ENCODE measurements at regions of chr6 and their contacts with region 1.

Region 1: DNA sequence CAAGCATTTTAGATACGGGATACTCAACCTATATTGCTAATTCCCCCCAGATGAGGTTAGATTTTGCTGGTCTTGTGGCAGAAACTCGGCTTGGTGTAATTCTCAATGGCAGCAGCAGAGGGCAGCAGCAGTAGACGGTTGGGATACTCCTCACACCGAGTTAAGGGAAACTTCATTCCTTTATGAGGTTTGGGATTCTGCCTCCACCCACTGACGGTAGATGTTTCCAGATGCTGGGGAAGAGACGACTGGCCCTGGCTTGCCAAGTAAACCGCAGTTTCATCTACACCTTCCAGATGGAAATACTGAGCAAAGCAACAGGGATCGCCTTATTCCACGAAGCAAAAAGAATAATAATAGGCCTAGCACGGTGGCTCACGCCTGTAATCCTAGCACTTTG is 8.2 kb upstream of the TBC1D7 start:
- DNase-seq: peak; percentile 95
- H3K4me3 ChIP-seq: no peak overlapping the region
- H3K27ac ChIP-seq: peak overlapping the region; percentile 43
- H3K4me1 ChIP-seq: peaks cover 9% of the 10 kb centered on the region
- H3K27me3 ChIP-seq: no peaks in the 10 kb centered on the region
- CTCF ChIP-seq: peak; percentile 80 to 88

Region 2: DNA sequence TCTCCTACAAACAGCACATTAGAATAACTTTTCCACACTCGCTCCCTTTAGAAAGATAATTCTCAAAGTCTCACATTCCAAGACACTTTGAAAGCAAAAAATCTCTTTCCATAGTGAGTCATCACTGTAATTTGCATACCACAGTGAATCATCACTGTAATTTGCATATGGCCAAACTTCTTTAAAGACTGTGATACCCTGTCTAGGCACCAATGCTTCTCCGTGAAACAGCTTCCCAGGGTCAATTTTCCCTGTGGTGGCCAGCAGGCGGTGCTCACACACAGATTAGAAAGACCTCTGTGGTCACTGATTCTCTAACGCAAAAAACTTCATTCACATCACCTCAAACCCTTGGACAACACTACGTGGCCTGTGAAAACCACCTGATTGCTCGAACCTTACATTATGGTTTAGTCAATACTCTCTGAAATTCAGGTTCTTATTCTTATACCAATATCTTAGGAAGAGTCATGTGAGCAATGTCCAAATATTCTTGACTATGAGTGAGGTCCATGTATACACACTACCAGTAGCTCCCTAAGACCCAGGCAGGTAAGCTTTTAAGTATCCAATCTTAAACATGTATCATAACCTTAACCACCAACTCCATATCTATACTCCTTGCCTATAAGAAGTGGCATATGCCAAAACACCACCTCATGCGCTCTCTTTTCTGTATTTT is 698.5 kb before region 1 on chr6:
- CTCF ChIA-PET with region 1: no interaction called
- dilution Hi-C with region 1: no loop called
- in situ Hi-C with region 1: no loop called
- intact Hi-C with region 1: loop called (anchors 10 kb)
- DNase-seq: peak; percentile 68
- H3K4me3 ChIP-seq: no peak overlapping the region
- H3K27ac ChIP-seq: no peak overlapping the region
- H3K4me1 ChIP-seq: no peaks in the 10 kb centered on the region
- H3K27me3 ChIP-seq: no peaks in the 10 kb centered on the region
- CTCF ChIP-seq: peak; percentile 73 to 87

Region 3: DNA sequence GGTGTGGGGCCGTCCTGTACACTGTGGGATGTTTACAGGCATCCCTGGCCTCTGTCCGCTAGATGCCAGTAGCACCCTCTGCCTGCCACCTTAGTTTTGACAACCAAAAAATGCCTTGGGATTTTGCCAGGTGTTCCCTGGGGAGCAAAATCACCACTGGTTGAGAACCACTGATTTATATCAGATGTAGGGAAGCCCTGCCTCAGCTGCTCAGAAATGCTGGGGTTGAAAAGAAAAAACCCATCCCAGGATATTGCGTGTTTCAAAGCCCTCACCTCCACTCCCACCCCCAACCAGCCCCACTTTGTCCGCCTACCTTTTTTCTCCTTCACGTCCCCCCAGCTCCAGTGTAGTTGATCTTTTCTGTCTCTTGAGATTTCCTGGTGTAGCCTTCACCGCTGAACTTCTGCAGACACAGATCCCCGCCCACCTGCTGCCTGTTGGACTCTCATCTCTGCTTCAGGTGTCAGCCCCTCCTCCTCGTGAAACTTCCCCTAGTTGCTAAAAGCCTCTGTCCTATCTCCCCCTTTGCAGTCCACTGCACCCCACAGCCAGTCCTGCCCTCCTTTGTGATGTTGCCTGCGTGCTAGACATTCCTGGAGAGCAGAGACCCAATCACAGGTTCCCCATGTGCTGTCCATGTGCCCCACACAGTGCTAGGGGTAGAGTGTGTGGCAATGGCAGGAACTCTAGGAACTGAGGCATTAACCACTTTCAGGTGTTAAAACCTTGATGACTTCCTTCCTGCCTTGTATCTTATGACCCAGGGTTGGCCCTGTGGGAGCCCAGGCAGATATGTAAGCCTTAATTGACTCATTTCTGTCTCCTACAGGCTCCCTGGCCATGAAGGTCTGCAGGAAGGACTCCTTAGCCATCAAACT is 107.1 kb before region 1 on chr6:
- CTCF ChIA-PET with region 1: no interaction called
- dilution Hi-C with region 1: no loop called
- in situ Hi-C with region 1: no loop called
- intact Hi-C with region 1: loop called (anchors 10 kb)
- DNase-seq: no peak
- H3K4me3 ChIP-seq: no peak overlapping the region
- H3K27ac ChIP-seq: no peak overlapping the region
- H3K4me1 ChIP-seq: peaks cover 4% of the 10 kb centered on the region
- H3K27me3 ChIP-seq: peaks cover 2% of the 10 kb centered on the region
- CTCF ChIP-seq: peak in 1 of 2 donors; percentile 38

Region 4: DNA sequence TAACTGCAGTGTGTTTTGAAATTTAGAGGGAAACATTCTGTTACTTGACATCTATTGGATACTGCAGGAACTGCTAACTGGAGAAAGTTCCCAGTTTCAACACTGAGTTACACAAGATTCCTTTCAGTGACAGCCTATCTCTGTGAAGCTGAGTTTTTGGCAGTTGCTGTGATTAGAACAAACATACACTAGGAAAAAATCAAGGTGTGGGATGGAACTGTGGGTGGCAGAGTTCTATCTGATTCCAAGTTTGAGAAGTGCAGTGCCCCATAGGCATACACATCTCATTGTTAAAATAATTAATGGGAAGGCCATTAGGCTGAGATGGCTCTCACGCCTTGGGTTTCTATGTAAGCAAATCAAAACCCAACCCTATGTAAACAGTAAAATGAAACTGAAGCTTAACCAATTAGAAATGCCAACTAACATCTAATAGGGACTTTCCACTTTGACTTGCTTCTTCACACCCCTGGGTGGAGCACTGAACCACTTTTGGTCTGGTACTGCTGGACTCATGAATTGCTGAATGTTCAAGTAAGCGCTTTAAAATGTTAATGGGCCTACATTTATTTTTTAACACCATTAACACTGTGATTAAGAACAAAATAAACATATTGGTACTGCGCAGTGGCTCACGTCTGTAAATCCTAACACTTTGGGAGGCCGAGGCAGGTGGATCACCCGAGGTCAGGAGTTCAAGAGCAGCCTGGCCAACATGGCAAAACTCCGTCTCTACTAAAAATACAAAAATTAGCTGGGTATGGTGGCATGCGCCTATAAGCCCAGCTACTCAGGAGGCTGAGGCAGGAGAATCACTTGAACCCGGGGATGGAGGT is 47.0 kb after region 1 on chr6:
- CTCF ChIA-PET with region 1: no interaction called
- dilution Hi-C with region 1: no loop called
- in situ Hi-C with region 1: no loop called
- intact Hi-C with region 1: loop called (anchors 2 kb)
- DNase-seq: peak; percentile 69
- H3K4me3 ChIP-seq: no peak overlapping the region
- H3K27ac ChIP-seq: peak overlapping the region; percentile 29
- H3K4me1 ChIP-seq: no peaks in the 10 kb centered on the region
- H3K27me3 ChIP-seq: no peaks in the 10 kb centered on the region
- CTCF ChIP-seq: peak in 1 of 2 donors; percentile 42

Region 5: DNA sequence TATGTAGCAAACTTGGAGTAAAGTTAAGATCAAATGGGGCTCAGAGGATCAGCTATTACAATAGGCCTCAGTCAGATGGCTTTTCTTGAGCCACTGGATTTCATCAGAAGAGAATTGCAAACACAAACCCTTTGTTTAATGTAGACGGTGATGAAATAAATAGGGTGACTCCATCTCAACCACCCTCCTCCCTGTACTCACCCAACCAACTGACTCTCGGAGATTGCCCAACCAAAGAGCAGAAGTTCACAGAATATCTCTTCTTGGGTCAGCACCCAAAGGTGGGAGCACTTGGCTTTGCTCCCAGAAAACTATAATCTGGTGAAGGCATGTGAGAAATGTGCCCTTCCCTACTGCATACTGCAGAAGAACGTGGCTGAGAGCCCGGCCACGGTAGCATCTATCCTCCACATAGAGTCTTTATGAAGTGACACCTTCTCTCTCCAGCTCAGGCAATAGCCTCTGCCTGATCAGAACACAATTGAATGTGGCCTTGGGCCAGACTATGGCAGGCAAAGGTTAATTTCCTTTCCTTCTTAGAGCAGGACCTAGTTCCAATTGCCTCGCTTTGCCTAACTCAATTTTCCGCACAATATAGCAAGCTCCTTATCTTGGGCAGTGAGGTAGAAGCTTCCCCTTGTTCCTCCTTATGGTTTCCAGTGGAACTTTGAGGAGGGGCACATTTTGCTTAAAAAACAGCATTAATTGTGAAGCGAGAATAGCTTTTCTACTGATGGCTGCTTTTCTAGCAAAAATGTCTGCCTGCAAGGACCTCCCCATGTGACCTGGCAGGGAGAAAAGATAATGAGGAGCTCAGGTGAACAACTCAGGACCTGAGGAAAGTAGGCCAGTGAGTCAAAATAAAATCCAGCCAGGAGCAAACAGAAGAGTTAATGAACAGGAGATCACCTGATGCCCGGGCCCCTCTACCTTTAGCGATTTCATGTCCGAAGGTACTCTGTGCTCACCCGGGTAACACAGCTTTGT is 71.4 kb after region 1 on chr6:
- CTCF ChIA-PET with region 1: no interaction called
- dilution Hi-C with region 1: no loop called
- in situ Hi-C with region 1: no loop called
- intact Hi-C with region 1: loop called (anchors 1 kb)
- DNase-seq: peak; percentile 99
- H3K4me3 ChIP-seq: no peak overlapping the region
- H3K27ac ChIP-seq: peak overlapping the region; percentile 96
- H3K4me1 ChIP-seq: peaks cover 32% of the 10 kb centered on the region
- H3K27me3 ChIP-seq: no peaks in the 10 kb centered on the region
- CTCF ChIP-seq: no peak

Region 6: GRCh38 chr6:13538084-13538483 is 201.5 kb after region 1 on chr6:
- CTCF ChIA-PET with region 1: no interaction called
- dilution Hi-C with region 1: no loop called
- in situ Hi-C with region 1: loop called (anchors 10 kb)
- intact Hi-C with region 1: loop called (anchors 1 kb)
- DNase-seq: peak; percentile 22
- H3K4me3 ChIP-seq: no peak overlapping the region
- H3K27ac ChIP-seq: no peak overlapping the region
- H3K4me1 ChIP-seq: no peaks in the 10 kb centered on the region
- H3K27me3 ChIP-seq: no peaks in the 10 kb centered on the region
- CTCF ChIP-seq: peak; percentile 10 to 48

Region 7: DNA sequence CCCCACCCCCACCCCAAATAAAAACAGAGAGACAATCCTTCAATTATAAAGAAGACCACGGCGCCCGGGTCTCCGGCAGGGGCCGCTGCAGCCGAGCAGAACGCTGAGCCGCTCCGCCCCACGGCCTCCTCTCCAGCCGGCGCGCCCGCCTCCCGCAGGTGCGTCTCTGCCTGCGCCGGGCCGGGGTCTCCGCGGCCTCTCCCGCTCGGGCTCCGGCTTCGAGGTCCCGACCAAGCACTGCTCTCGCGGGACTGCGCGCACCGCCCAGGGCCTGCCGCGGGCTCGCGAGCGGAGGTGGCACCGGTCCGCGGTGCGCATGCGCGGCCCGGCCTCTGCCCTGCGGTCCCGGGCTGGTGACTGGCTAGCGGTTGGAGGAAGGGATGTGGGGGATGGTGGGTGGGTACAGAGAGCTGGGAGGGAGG is 237.6 kb after region 1 on chr6:
- CTCF ChIA-PET with region 1: no interaction called
- dilution Hi-C with region 1: no loop called
- in situ Hi-C with region 1: no loop called
- intact Hi-C with region 1: loop called (anchors 1 kb)
- DNase-seq: peak; percentile 92
- H3K4me3 ChIP-seq: peak overlapping the region; percentile 61 to 92 (median 77)
- H3K27ac ChIP-seq: peak overlapping the region; percentile 92
- H3K4me1 ChIP-seq: peaks cover 9% of the 10 kb centered on the region
- H3K27me3 ChIP-seq: no peaks in the 10 kb centered on the region
- CTCF ChIP-seq: peak; percentile 15 to 55

Measured in mammary epithelial cell (primary cell).